ENCODE measurements at regions of chr3 and their contacts with region 1.

Region 1: GRCh38 chr3:134464064-134464697 is 21.6 kb downstream of the ANAPC13 start:
- DNase-seq: peak; percentile 30 to 69 (median 45)
- ATAC-seq: peak; percentile 56
- H3K4me3 ChIP-seq: no peak overlapping the region
- H3K4me1 ChIP-seq: no peaks in the 10 kb centered on the region
- CTCF ChIP-seq: no peak

Region 2: DNA sequence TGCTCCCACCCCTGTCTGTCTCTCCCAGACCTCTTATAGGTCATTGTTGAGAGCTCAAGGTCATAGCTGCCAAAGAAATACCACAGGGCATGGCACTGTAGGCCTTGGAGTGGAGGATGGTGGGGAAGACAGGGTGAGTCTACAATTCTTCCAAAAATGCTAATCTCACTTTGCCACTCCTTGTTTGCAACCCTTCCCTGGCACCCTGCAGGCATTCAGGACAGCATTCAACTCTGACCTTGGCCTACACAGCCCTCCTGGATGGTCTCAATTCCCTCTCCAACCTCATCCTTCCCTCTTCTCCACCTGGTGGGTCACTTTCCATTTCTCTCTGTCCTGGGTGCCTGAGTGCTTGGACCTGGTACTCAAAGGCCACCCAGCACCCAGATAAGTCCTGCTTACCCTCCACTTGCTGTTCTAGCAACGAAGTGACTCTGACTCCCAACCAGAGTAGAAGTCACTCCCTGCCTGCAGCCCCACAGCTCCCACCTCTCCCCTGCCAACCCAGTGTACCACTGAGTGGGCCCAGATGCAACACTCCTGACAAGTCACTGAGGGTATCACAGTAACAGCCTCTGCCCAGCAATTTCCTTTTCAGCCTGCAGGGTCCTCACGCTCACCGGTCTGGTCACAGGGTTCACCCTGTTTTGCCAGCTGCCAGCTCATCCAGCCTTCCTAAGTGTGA is 126.5 kb before region 1 on chr3:
- intact Hi-C with region 1: no loop called
- DNase-seq: no peak
- ATAC-seq: no peak
- H3K4me3 ChIP-seq: no peak overlapping the region
- H3K4me1 ChIP-seq: peaks cover 6% of the 10 kb centered on the region
- CTCF ChIP-seq: no peak

Region 3: GRCh38 chr3:134378384-134378783 is 85.8 kb before region 1 on chr3:
- intact Hi-C with region 1: loop called in 1 of 2 experiments (anchors 10 kb)
- DNase-seq: peak in 2 of 3 donors; percentile 68 to 69
- ATAC-seq: no peak
- H3K4me3 ChIP-seq: no peak overlapping the region
- H3K4me1 ChIP-seq: peaks cover 18% of the 10 kb centered on the region
- CTCF ChIP-seq: peak; percentile 36

Region 4: GRCh38 chr3:135329479-135329878 is 865.3 kb after region 1 on chr3:
- intact Hi-C with region 1: no loop called
- DNase-seq: no peak
- ATAC-seq: no peak
- H3K4me3 ChIP-seq: no peak overlapping the region
- H3K4me1 ChIP-seq: no peaks in the 10 kb centered on the region
- CTCF ChIP-seq: no peak

Measured in mucosa of descending colon (tissue), 3 donors.